ENCODE measurements at regions of chr1 and their contacts with region 1.

Region 1: DNA sequence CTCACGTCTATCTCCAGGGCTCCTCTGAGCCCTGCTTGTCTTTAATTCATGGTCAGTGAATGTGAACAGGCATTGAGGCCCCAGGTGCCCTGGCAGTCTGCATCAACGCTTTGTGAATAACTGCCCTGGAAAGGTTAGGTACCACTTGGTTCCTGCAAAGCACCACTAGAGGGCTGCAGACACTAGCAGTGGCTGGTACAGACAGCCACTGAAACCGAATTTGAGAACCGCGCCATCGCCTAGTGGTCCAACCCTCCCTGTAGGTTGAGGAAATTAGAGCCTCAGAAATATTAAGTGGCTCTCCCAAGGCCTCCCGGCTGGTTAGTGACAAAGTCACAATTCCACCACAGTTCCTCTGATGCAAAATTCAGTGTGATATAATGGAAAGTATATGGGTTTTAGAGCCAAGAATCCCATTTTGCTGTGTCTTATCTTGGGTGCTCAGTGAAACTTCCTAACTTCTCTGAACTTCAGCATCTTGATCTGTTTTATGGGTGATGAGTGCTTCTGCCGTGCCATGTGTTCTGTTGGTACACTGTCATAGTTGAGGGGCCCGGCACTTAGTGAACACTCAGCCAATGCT is 46.2 kb upstream of the BCL9 start:
- DNase-seq: no peak
- H3K4me3 ChIP-seq: no peak overlapping the region
- H3K27ac ChIP-seq: no peak overlapping the region
- H3K4me1 ChIP-seq: peaks cover 6% of the 10 kb centered on the region
- H3K27me3 ChIP-seq: no peaks in the 10 kb centered on the region
- CTCF ChIP-seq: peak; percentile 66 to 91 (median 85)
- POLR2A ChIP-seq: no peak

Region 2: DNA sequence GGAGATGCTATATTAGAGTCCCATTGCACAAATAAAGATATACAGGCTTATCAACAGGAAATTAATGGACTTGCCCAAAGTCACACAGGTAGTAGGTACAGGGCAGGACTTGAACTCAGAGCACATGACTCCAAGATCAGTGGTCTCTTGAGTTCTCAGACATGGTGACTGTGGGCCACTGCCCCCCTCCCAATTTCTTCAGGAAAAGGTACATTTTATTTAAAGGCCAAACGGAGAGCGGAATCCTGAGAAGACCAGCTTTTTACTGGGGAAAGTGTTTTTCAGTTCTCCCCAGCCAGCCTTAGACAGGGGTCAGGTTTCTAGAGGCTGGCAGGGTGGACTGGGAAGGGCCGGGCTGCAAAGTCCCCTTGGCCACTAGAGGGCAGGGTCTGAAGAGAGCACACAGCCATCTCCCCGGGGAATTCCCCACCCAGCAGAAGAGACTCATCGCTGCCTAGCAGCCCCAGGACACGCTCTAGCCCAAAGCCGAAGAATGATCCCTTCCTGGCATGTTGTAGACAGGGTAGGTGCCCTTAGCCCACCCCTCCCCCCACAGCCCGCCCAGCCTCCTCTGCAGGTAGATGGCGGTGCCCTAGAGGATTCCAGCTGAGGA is 145.6 kb after region 1 on chr1:
- intact Hi-C with region 1: loop called (anchors 5 kb)
- DNase-seq: no peak
- H3K4me3 ChIP-seq: no peak overlapping the region
- H3K27ac ChIP-seq: no peak overlapping the region
- H3K4me1 ChIP-seq: no peaks in the 10 kb centered on the region
- H3K27me3 ChIP-seq: no peaks in the 10 kb centered on the region
- CTCF ChIP-seq: peak in 2 of 3 experiments; percentile 56 to 66
- POLR2A ChIP-seq: no peak